Esophagus squamous epithelium (tissue), 5 donors: ENCODE measurements at regions of chr17 and their contacts with region 1.

Region 1: DNA sequence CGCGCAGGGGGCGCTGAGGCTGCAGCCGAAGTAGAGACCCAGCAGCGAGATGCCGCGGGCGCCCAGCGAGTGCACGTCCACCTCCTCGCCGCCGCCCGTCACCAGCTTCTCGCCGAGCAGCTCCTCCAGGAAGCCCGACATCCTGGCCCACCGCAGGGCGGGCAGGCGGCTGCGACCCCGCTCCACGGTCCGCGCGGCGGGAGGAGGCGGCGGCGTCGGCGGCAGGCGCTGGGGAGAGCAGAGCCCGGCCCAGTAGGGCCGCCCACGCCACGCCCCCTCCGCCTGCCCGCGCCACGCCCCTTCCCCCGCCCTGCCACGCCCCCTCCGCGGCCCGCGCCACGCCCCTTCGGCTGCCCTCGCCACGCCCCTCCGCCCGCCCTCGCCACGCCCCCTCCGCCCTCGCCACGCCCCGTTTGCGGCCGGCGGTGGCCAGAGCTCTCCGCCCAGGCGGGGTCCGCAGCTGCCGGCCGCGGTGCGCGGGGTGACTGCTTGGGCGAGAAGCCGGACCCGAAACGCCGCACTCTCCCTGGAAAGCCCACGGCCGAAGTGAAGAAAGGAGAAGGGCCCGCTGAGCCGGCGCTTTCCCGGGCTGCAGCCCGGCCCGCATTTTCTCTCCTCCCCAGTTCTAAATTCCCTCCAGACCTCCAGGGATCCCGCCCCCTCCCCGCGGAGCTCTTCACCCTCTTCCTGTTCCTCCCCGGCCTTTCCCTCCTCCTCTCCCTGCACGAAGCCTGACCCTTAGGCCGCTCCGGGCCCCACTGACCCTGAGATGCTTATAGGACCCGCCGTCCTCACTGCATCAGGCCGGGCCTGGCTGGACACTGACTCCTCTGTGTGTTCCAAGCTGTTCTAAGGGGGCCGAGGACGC is at the start of gene NXN:
- DNase-seq: peak; percentile 18
- H3K4me3 ChIP-seq: peak within 1 kb of the TSS; percentile 63 to 94 (median 81)
- H3K27ac ChIP-seq: peak within 1 kb of the TSS; percentile 88 to 92 (median 91)
- H3K4me1 ChIP-seq: peaks cover 19 to 57% (median 24%) of the 10 kb centered on the region in 3 donors
- H3K27me3 ChIP-seq: peaks cover 0 to 6% (median 0%) of the 10 kb centered on the region in 4 donors
- CTCF ChIP-seq: peak in 2 of 6 experiments; percentile 21 to 27
- POLR2A ChIP-seq: peak in 3 of 4 donors; percentile 19 to 88 (median 43)
- total RNA-seq, gene NXN: 19.5 to 34.9 (median 28.7) TPM

Region 2: DNA sequence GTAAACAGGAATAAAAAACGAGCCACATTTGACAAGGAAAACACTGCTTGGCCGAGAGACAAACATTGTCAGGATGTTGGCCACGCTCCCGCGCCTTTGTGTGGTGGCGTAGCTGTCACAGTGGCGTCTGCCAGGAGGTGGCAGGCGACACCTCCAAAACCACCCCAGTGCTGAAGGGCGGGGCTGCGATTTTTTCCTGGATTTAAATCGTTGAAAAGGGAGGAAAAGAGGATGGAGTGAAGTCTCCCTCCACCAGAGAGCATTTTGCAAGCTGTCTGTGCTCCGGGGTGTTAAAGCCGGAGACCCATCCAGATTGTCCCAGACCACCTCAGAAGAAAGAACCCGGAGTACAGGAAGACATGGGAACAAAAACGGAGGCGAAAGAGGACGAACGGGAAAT is 184.9 kb before region 1 on chr17:
- intact Hi-C with region 1: loop called (anchors 5 kb)
- DNase-seq: no peak
- H3K4me3 ChIP-seq: peak overlapping the region in 3 of 4 donors; percentile 13 to 50 (median 27)
- H3K27ac ChIP-seq: peak overlapping the region; percentile 39 to 95 (median 69)
- H3K4me1 ChIP-seq: peaks cover 7 to 56% (median 10%) of the 10 kb centered on the region in 3 donors
- H3K27me3 ChIP-seq: no peaks in the 10 kb centered on the region
- CTCF ChIP-seq: peak; percentile 68 to 94 (median 89)
- POLR2A ChIP-seq: no peak

Region 3: DNA sequence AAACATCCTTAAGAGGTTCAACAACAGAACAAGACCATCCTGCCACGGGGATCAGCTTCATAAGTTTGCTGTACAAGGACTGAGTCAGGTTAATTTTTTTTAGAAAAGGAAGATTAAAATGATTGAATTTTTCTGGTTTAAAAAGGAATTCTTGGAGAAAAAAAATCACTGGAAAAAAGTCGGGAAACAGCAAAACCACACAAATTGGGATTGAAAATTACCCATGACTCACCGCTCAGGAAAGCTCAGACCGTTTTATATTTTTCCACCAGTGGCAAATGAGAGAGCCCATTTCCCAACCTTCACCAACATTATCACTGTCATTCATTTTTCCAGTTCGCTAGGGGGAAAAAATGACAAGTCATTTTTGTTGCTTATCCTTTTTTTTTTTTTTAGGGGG is 151.0 kb before region 1 on chr17:
- intact Hi-C with region 1: no loop called
- DNase-seq: no peak
- H3K4me3 ChIP-seq: no peak overlapping the region
- H3K27ac ChIP-seq: no peak overlapping the region
- H3K4me1 ChIP-seq: peaks cover 0 to 7% (median 0%) of the 10 kb centered on the region in 3 donors
- H3K27me3 ChIP-seq: no peaks in the 10 kb centered on the region
- CTCF ChIP-seq: no peak
- POLR2A ChIP-seq: no peak